ENCODE measurements at regions of chr1 and their contacts with region 1.

Region 1: DNA sequence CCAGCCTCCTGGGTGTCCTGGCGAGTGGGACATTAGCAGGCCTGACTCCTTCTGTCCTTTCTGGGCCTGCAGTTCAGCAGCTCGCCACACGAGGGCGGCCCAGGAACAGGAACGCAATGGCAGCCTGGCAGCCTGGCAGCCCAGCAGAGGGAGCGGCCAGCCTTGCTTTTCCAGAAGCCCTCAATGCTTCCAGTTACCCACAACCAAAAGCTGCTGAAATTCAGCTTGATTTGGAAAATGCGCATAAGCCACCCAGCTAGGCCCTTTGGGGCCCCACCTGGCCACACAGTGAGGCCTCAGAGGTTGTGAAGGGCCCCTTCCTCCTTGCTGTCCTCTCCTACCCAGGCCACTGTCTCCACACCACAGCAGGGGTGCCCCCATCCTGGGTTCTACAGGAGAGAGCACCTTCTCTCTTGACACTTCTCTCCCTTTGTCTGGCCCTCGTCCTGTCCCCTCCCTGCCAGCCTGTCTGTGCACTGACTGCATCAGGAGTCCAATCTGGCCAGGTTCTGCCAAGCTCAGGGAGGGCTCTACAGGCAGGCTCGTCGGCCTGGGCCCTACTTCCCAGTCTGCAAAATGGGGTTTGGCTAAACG is 103.4 kb upstream of the VAMP3 start:
- DNase-seq: peak; percentile 83 to 94 (median 88)
- ATAC-seq: peak; percentile 75 to 88 (median 83)
- H3K4me3 ChIP-seq: no peak overlapping the region
- H3K27ac ChIP-seq: no peak overlapping the region
- H3K4me1 ChIP-seq: peaks cover 0 to 19% (median 10%) of the 10 kb centered on the region in 12 donors
- H3K27me3 ChIP-seq: no peaks in the 10 kb centered on the region
- CTCF ChIP-seq: peak in 11 of 12 donors; percentile 99 to 100 (median 100)
- POLR2A ChIP-seq: no peak

Region 2: GRCh38 chr1:7752512-7753417 is 85.0 kb after region 1 on chr1:
- intact Hi-C with region 1: loop called (anchors 1 to 2 kb)
- DNase-seq: peak in 4 of 5 donors; percentile 46 to 65 (median 55)
- ATAC-seq: peak; percentile 42 to 56 (median 51)
- H3K4me3 ChIP-seq: peak overlapping the region in 6 of 12 donors; percentile 16 to 38 (median 30)
- H3K27ac ChIP-seq: no peak overlapping the region
- H3K4me1 ChIP-seq: peaks cover 0 to 19% (median 0%) of the 10 kb centered on the region in 12 donors
- H3K27me3 ChIP-seq: no peaks in the 10 kb centered on the region
- CTCF ChIP-seq: peak; percentile 62 to 89 (median 84)
- POLR2A ChIP-seq: no peak

Region 3: DNA sequence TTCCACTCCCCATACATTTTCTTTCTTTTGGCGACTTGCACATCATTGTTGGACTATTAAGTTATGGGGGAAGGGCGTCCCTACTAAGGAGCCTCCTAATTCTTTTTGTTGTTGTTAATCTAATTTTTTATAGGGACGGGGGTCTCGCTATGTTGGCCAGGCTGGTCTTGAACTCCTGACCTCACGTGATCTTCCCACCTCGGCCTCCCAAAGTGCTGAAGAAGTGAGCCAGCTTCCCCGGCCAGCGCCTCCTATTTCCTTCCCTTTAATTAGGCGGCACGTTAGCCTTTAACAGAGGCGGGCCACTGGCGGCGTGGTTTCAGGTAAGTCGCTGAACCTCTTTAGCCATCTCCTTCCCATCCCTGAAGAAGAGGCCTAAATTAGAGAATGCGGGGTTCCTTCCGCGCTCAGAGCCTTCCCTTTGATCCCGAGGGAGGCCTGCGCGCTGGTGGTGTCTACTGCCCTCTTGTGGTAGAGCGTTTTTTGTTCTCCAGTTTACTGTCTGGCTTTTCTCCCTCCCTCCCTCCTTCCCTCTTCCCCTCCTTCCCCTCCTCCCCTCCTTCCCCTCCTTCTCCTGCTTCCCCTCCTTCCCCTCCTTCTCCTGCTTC is 234.9 kb after region 1 on chr1:
- intact Hi-C with region 1: loop called in 7 of 10 experiments (anchors 2 to 5 kb)
- DNase-seq: peak; percentile 40 to 77 (median 53)
- ATAC-seq: peak; percentile 47 to 85 (median 76)
- H3K4me3 ChIP-seq: peak overlapping the region in 8 of 12 donors; percentile 4 to 44 (median 29)
- H3K27ac ChIP-seq: no peak overlapping the region
- H3K4me1 ChIP-seq: peaks cover 0 to 4% (median 0%) of the 10 kb centered on the region in 12 donors
- H3K27me3 ChIP-seq: no peaks in the 10 kb centered on the region
- CTCF ChIP-seq: peak; percentile 48 to 73 (median 62)
- POLR2A ChIP-seq: no peak